ENCODE measurements at regions of chr13 and their contacts with region 1.

Region 1: DNA sequence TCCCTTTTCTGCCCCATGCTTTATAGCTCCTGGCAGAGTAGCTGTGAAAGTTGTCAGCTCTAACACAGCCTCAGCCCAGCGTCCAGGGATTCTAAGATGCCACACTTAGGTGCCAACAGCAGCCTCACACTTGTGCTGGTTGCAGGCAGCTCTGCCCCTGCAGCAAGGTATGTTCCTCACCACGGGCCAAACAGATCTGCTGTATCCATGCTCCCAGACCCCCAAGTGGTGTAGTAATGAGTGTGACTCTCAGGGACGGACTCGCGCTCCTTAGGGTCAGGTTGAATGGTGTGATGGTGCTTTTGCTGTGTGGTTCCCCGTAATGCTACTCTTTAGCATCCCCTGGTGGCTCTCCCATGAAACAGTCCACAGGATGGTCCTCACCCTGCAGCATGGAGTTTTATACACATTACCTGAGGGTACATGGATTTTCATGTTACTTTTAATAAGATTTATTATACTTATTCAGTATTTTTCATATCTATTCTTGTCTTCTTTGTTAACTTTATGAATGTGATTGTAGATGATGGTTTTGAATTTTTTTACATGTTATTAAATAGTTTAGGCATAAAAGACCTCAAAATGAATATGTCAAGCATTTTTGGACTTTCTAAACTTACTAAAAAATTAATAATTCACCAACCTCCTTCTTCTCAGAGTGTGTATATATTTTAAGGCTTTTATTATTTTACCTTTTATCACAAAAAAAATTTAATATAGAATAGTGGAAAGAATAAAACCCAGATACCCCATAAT is 232.5 kb downstream of the SLC7A1 start:
- DNase-seq: peak in 5 of 9 donors; percentile 7 to 25 (median 16)
- ATAC-seq: peak; percentile 83
- H3K4me3 ChIP-seq: no peak overlapping the region
- H3K4me3 Mint-ChIP-seq: peak overlapping the region in 7 of 10 donors; percentile 5 to 51 (median 20)
- H3K27ac ChIP-seq: no peak overlapping the region
- H3K27ac Mint-ChIP-seq: no peak overlapping the region
- H3K4me1 ChIP-seq: no peaks in the 10 kb centered on the region
- H3K4me1 Mint-ChIP-seq: peaks cover 0 to 4% (median 0%) of the 10 kb centered on the region in 7 donors
- H3K27me3 ChIP-seq: no peaks in the 10 kb centered on the region
- H3K27me3 Mint-ChIP-seq: peaks cover 7 to 25% (median 11%) of the 10 kb centered on the region in 5 donors

Region 2: DNA sequence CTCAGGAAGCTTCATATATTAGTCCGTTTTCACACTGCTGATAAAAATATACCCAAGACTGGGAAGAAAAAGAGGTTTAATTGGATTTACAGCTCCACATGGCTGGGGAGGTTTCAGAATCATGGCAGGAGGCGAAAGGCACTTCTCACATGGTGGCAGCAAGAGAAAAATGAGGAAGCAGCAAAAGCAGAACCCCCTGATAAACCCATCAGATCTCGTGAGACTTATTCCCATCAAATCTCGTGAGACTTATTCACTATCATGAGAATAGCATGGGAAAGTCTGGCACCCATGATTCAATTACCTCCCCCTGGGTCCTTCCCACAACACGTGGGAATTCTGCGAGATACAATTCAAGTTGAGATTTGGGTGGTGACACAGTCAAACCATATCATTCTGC is 1285.8 kb before region 1 on chr13:
- CTCF ChIA-PET with region 1: no interaction called
- POLR2A ChIA-PET with region 1: no interaction called
- intact Hi-C with region 1: no loop called
- DNase-seq: no peak
- ATAC-seq: no peak
- H3K4me3 ChIP-seq: no peak overlapping the region
- H3K4me3 Mint-ChIP-seq: no peak overlapping the region
- H3K27ac ChIP-seq: no peak overlapping the region
- H3K27ac Mint-ChIP-seq: no peak overlapping the region
- H3K4me1 ChIP-seq: no peaks in the 10 kb centered on the region
- H3K4me1 Mint-ChIP-seq: no peaks in the 10 kb centered on the region
- H3K27me3 ChIP-seq: no peaks in the 10 kb centered on the region
- H3K27me3 Mint-ChIP-seq: peaks cover 0 to 8% (median 0%) of the 10 kb centered on the region in 5 donors

Region 3: GRCh38 chr13:28819735-28820098 is 543.3 kb before region 1 on chr13:
- CTCF ChIA-PET with region 1: interaction called, 3 read pairs
- POLR2A ChIA-PET with region 1: no interaction called
- intact Hi-C with region 1: loop called (anchors 2 kb)
- DNase-seq: peak in 5 of 9 donors; percentile 14 to 68 (median 25)
- ATAC-seq: peak; percentile 83
- H3K4me3 ChIP-seq: no peak overlapping the region
- H3K4me3 Mint-ChIP-seq: peak overlapping the region in 1 of 10 donors; percentile 63
- H3K27ac ChIP-seq: no peak overlapping the region
- H3K27ac Mint-ChIP-seq: no peak overlapping the region
- H3K4me1 ChIP-seq: peaks cover 0 to 5% of the 10 kb centered on the region in 2 donors
- H3K4me1 Mint-ChIP-seq: peaks cover 0 to 9% (median 5%) of the 10 kb centered on the region in 7 donors
- H3K27me3 ChIP-seq: no peaks in the 10 kb centered on the region
- H3K27me3 Mint-ChIP-seq: peaks cover 53 to 67% (median 59%) of the 10 kb centered on the region in 5 donors

Region 4: DNA sequence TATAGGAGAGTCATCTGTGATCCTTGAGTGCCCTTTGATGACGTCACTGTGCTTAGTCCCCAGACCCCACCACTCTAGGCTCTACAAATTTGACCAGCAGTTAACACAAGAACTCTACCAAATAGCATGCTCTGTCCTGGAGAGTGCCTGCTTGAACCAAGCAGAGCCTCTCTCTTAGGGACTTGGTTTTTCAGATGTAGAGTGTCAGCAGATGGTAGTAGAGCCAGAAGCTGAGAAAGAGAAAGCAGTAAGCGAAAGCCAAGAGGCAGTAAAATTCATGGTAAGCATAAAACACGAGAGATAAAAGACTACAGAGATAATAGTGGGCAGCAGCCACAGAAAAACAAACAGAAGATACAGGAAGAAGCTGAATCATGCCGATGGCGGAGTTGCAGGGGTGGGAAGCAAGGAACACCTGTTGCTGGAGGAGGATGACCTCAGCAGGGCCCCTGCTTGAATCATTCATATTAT is 39.2 kb after region 1 on chr13:
- CTCF ChIA-PET with region 1: no interaction called
- POLR2A ChIA-PET with region 1: no interaction called
- intact Hi-C with region 1: no loop called
- DNase-seq: no peak
- ATAC-seq: no peak
- H3K4me3 ChIP-seq: no peak overlapping the region
- H3K4me3 Mint-ChIP-seq: no peak overlapping the region
- H3K27ac ChIP-seq: no peak overlapping the region
- H3K27ac Mint-ChIP-seq: no peak overlapping the region
- H3K4me1 ChIP-seq: no peaks in the 10 kb centered on the region
- H3K4me1 Mint-ChIP-seq: no peaks in the 10 kb centered on the region
- H3K27me3 ChIP-seq: no peaks in the 10 kb centered on the region
- H3K27me3 Mint-ChIP-seq: peaks cover 0 to 29% (median 15%) of the 10 kb centered on the region in 5 donors

Region 5: DNA sequence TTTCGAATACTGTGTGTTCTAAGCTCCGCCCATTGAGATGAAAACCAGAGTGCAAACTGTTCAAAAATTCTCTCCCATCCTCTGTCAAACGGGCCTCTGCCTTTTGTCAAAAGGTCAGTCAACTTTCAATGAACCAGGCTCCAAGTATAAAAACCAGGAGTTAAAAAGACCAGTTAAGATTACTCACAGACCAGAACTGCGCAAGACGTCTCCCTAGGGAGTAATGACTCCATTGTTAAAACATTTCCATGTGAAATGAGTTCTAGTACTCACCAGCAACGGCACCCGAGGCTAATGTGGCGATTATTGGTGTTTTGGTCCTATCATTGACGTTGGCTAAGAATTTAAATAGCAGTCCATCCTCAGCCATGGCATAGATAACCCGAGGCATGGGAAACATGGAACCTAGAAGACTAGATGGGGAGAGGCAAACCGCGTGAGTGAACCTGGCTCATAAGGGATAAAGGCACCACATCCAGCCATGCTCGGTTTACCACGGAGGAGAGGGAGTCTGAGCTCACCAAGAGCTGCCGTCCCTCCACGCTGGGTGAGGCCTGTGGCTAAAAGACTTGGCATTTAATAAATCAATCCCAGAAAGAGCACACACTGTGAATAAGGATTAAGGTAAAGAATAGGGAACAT is 159.1 kb after region 1 on chr13:
- CTCF ChIA-PET with region 1: no interaction called
- POLR2A ChIA-PET with region 1: no interaction called
- intact Hi-C with region 1: no loop called
- DNase-seq: no peak
- ATAC-seq: no peak
- H3K4me3 ChIP-seq: no peak overlapping the region
- H3K4me3 Mint-ChIP-seq: no peak overlapping the region
- H3K27ac ChIP-seq: no peak overlapping the region
- H3K27ac Mint-ChIP-seq: no peak overlapping the region
- H3K4me1 ChIP-seq: no peaks in the 10 kb centered on the region
- H3K4me1 Mint-ChIP-seq: peaks cover 0 to 2% (median 0%) of the 10 kb centered on the region in 7 donors
- H3K27me3 ChIP-seq: no peaks in the 10 kb centered on the region
- H3K27me3 Mint-ChIP-seq: no peaks in the 10 kb centered on the region

Region 6: DNA sequence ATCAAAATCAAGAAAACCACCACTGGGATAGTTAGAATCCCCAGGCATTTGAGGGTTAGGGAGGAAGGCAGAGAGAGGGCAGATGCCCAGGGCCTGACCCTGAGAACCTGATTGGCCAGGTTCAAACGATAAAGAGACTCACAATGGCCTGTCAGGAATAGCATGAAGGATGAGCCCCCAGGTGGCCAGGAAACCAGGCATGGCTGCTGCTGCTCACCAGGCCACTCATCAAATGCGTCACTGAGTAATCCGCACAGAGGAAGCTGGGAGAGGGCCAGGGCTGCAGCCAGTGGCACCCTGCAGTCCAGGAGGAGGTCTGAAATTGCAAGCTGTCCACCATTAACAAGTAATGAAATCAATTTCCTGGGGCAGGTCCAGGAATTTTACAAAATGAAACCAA is 833.0 kb after region 1 on chr13:
- CTCF ChIA-PET with region 1: no interaction called
- POLR2A ChIA-PET with region 1: no interaction called
- intact Hi-C with region 1: no loop called
- DNase-seq: no peak
- ATAC-seq: no peak
- H3K4me3 ChIP-seq: no peak overlapping the region
- H3K4me3 Mint-ChIP-seq: no peak overlapping the region
- H3K27ac ChIP-seq: no peak overlapping the region
- H3K27ac Mint-ChIP-seq: peak overlapping the region in 1 of 9 donors; percentile 26
- H3K4me1 ChIP-seq: no peaks in the 10 kb centered on the region
- H3K4me1 Mint-ChIP-seq: no peaks in the 10 kb centered on the region
- H3K27me3 ChIP-seq: no peaks in the 10 kb centered on the region
- H3K27me3 Mint-ChIP-seq: no peaks in the 10 kb centered on the region